PC-9 (cell line): ENCODE measurements at regions of chr16 and their contacts with region 1.

Region 1: DNA sequence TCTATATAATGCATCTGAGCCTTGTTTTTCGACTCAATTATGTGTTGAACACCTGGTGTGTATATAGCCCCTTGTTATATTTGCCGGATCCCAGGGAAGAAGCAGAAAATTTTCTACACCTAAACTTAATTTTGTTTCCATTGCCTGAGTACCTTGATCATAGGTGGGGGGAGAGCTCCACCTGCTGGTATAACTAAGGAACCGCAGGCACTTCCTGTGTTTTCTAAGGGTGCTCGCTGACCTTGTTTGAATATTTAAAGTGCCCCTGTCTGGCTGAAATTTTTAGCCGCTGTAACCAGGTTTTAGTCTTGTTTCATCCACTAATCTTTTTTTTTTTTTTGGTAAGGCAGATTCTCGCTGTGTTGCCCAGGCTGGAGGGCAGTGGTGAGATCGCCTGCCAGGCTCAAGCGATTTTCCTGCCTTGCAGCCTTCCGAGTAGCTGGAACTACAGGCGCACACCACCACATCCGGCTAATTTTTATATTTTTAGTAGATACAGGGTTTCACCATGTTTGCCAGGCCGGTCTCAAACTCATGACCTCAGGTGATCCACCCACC is 6.5 kb upstream of the NUBP1 start:
- DNase-seq: peak; percentile 67 to 70
- H3K4me3 ChIP-seq: no peak overlapping the region
- H3K27ac ChIP-seq: no peak overlapping the region
- H3K4me1 ChIP-seq: peaks cover 8% of the 10 kb centered on the region
- H3K27me3 ChIP-seq: no peaks in the 10 kb centered on the region
- CTCF ChIP-seq: peak; percentile 95

Region 2: GRCh38 chr16:9159839-9160550 is 1577.2 kb before region 1 on chr16:
- CTCF ChIA-PET with region 1: no interaction called
- POLR2A ChIA-PET with region 1: no interaction called
- intact Hi-C with region 1: loop called (anchors 1 kb)
- DNase-seq: peak; percentile 45 to 86
- H3K4me3 ChIP-seq: no peak overlapping the region
- H3K27ac ChIP-seq: no peak overlapping the region
- H3K4me1 ChIP-seq: no peaks in the 10 kb centered on the region
- H3K27me3 ChIP-seq: peaks cover 6% of the 10 kb centered on the region; the same call in 1 of the 2 replicates
- CTCF ChIP-seq: peak; percentile 96

Region 3: DNA sequence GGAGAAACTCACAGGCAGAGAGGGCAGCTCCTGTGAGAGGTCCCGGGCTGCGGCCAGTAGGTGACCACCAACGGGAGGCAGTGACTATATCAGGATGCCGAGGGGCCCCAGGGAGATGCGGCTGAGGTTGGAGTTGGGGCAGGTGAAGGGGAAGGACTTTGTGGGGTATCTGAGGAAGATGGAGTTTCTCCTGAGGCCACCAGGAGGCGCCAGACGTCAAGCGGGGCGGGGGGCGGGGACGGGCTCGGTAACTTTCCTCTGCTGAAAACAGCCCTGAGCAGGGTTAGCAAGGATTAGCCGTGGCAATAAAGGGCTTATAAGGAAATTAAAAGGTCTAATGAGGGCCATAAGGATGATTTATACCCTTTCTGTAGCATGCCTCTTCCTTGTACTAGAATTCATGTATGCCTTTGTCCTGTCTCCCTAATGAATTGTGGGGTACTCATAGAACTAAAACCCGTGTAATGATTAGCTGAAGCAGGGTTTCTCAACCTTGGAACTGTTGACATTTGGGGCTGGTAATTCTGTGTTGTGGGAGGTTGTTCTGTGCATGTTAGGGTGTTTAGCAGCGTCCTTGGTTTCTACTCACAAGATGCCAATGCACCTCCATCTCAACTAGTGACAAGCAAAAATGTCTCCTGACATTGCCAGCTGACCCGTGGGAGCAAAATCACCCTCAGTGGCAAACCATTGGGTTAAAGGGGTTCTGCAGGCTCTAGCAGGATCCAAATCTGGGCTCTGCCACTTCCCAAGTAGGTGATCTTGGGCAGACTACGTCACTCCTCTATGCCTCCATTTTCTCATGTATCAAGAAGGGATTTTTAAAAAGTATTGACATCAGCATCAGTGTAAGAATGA is 480.1 kb before region 1 on chr16:
- CTCF ChIA-PET with region 1: no interaction called
- POLR2A ChIA-PET with region 1: no interaction called
- intact Hi-C with region 1: loop called (anchors 1 kb)
- DNase-seq: peak in 1 of 2 experiments; percentile 16
- H3K4me3 ChIP-seq: no peak overlapping the region
- H3K27ac ChIP-seq: no peak overlapping the region
- H3K4me1 ChIP-seq: no peaks in the 10 kb centered on the region
- H3K27me3 ChIP-seq: peaks cover 31% of the 10 kb centered on the region
- CTCF ChIP-seq: peak; percentile 85

Region 4: GRCh38 chr16:10668322-10669045 is 68.7 kb before region 1 on chr16:
- CTCF ChIA-PET with region 1: no interaction called
- POLR2A ChIA-PET with region 1: no interaction called
- intact Hi-C with region 1: loop called (anchors 5 kb)
- DNase-seq: peak in 1 of 2 experiments; percentile 38
- H3K4me3 ChIP-seq: no peak overlapping the region
- H3K27ac ChIP-seq: no peak overlapping the region
- H3K4me1 ChIP-seq: no peaks in the 10 kb centered on the region
- H3K27me3 ChIP-seq: no peaks in the 10 kb centered on the region
- CTCF ChIP-seq: peak; percentile 66

Region 5: DNA sequence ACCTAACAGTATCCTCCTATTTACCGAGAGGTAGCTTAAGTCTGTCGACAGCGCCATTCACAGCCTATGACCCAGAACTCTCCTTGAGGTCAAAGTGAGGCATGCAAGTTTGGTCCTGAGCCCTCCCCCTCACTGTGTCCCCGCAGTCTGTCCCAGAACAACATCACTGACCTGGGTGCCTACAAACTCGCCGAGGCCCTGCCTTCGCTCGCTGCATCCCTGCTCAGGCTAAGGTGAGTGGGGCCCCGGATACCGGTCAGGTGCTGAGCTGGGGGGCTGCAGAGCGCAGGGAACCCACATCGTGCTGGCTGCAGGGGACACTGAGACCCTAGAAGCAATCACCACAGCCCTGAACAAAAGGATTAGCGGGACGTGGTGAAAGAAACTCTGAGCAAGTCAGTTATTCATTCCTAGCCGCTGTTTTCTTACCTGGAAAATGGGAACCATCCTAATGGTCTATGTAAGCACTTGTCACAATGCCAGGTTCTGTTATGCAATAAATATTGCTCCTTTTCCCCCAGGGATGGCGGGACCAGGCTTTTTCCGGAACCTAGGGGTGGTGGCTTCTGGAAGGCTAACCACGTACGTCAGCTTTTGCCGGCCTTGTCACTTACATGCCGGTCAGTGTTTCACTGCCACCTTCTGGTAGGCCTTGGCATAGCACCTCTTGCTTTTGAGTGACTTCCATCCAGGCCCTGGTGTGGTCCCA is 181.3 kb after region 1 on chr16:
- CTCF ChIA-PET with region 1: interaction called, 6 read pairs
- POLR2A ChIA-PET with region 1: no interaction called
- intact Hi-C with region 1: loop called (anchors 1 kb)
- DNase-seq: peak; percentile 62 to 89
- H3K4me3 ChIP-seq: no peak overlapping the region
- H3K27ac ChIP-seq: no peak overlapping the region
- H3K4me1 ChIP-seq: no peaks in the 10 kb centered on the region
- H3K27me3 ChIP-seq: no peaks in the 10 kb centered on the region
- CTCF ChIP-seq: peak; percentile 94